Posterior cingulate gyrus (tissue), 11 donors: ENCODE measurements at regions of chr12 and their contacts with region 1.

Region 1: GRCh38 chr12:6451348-6452244 is at the start of gene TAPBPL:
- DNase-seq: peak; percentile 78 to 98 (median 88)

Region 2: GRCh38 chr12:6335451-6336078 is 116.0 kb before region 1 on chr12:
- intact Hi-C with region 1: loop called (anchors 10 kb)
- DNase-seq: peak in 2 of 10 donors; percentile 45 to 79

Region 3: GRCh38 chr12:6430124-6430989 is 21.2 kb before region 1 on chr12:
- intact Hi-C with region 1: loop called (anchors 1 kb)
- DNase-seq: peak in 8 of 10 donors; percentile 27 to 85 (median 44)